ENCODE measurements at regions of chr17 and their contacts with region 1.

Region 1: GRCh38 chr17:40854159-40854814 is 12.7 kb downstream of the KRT12 start:
- DNase-seq: no peak
- H3K4me3 Mint-ChIP-seq: peak overlapping the region; percentile 33
- H3K27ac Mint-ChIP-seq: peak overlapping the region; percentile 86
- H3K4me1 Mint-ChIP-seq: peaks cover 85% of the 10 kb centered on the region
- H3K27me3 Mint-ChIP-seq: no peaks in the 10 kb centered on the region
- CTCF ChIP-seq: no peak

Region 2: GRCh38 chr17:39889200-39889599 is 965.1 kb before region 1 on chr17:
- CTCF ChIA-PET with region 1: no interaction called
- intact Hi-C with region 1: loop called (anchors 2 kb)
- DNase-seq: peak; percentile 82
- H3K4me3 Mint-ChIP-seq: no peak overlapping the region
- H3K27ac Mint-ChIP-seq: no peak overlapping the region
- H3K4me1 Mint-ChIP-seq: peaks cover 26% of the 10 kb centered on the region
- H3K27me3 Mint-ChIP-seq: peaks cover 22% of the 10 kb centered on the region
- CTCF ChIP-seq: no peak

Region 3: GRCh38 chr17:40803617-40804082 is 50.6 kb before region 1 on chr17:
- CTCF ChIA-PET with region 1: interaction called, 32 read pairs
- intact Hi-C with region 1: loop called (anchors 1 kb)
- DNase-seq: peak; percentile 100
- H3K4me3 Mint-ChIP-seq: no peak overlapping the region
- H3K27ac Mint-ChIP-seq: no peak overlapping the region
- H3K4me1 Mint-ChIP-seq: no peaks in the 10 kb centered on the region
- H3K27me3 Mint-ChIP-seq: peaks cover 38% of the 10 kb centered on the region
- CTCF ChIP-seq: peak; percentile 100

Region 4: DNA sequence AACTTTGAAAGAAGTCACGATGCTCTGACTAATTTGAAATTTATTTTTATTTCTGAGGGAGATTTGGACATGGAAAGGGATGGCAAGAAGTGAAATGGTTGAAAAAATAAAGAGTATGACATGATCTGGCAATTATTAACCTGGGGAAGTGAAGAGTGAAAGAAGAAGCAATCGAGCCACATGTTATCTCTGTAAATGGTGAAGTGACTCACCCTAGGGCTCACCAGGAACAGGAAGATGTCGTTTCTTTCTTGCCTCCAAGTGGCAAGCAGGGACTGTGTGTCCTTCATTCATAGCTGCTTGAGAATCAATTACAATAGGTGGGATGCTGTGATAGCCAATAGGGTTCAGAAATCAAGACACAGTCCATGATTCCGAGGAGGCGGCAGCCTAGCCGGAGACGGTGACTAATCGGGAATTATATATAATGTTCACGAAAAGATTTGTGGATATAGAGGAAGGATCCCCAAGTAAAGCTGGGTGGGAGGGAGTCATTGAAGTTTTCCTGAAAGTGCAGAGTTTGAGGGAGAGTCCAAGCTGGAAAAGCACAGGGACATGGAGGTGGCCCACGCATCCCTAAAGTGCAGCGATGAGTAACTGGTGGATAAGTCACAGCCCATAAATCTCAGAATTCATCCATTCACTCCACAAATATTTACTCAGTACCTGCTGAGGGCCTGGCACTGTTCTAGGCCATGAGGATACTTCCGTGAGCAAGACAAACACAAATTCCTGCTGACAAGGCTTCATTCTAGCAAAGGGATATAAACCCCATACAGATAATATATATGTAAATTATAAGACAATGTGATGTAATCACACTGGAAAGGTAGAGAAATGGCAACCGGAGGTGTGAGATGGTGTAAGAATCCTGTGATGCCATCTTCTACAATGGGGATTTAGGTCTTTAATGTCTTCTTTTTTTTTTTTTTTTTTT is 49.1 kb after region 1 on chr17:
- CTCF ChIA-PET with region 1: interaction called, 68 read pairs
- intact Hi-C with region 1: loop called (anchors 1 kb)
- DNase-seq: peak; percentile 82
- H3K4me3 Mint-ChIP-seq: peak overlapping the region; percentile 51
- H3K27ac Mint-ChIP-seq: peak overlapping the region; percentile 92
- H3K4me1 Mint-ChIP-seq: peaks cover 86% of the 10 kb centered on the region
- H3K27me3 Mint-ChIP-seq: no peaks in the 10 kb centered on the region
- CTCF ChIP-seq: no peak

Region 5: GRCh38 chr17:41037853-41038350 is 183.6 kb after region 1 on chr17:
- CTCF ChIA-PET with region 1: interaction called, 3 read pairs
- intact Hi-C with region 1: loop called (anchors 1 kb)
- DNase-seq: no peak
- H3K4me3 Mint-ChIP-seq: no peak overlapping the region
- H3K27ac Mint-ChIP-seq: no peak overlapping the region
- H3K4me1 Mint-ChIP-seq: peaks cover 49% of the 10 kb centered on the region
- H3K27me3 Mint-ChIP-seq: no peaks in the 10 kb centered on the region
- CTCF ChIP-seq: no peak

Region 6: DNA sequence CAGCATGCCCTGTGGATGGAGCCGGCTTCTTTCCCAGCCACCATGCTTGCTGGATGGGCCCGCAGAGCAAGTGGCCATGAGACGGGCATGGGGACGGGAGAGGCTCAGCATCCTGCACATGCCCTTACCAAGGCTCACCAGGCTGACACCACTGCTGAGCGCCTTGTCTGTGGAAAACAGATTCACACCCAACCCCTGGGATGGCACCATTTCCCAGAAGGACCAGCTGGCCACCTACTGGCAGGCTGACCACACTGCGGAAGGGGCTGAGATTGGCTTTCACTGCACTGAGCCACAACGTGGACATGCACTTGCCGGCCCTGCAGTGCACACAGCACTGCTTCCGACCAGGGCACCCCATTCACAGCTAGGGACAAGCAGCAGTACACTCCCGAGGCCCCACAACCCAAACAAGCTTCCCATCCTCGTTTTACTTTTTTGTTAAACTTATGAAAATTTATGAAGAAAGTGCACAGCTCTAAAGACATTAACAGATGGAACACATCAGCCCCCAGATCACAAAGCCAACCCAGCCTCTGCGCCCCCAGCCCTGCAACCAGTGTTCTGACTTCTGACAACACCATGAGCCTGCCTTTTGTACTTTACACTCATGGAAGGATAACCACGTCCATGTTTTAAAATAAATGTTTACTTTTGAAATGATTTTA is 475.1 kb after region 1 on chr17:
- CTCF ChIA-PET with region 1: no interaction called
- intact Hi-C with region 1: loop called (anchors 2 kb)
- DNase-seq: peak; percentile 85
- H3K4me3 Mint-ChIP-seq: no peak overlapping the region
- H3K27ac Mint-ChIP-seq: no peak overlapping the region
- H3K4me1 Mint-ChIP-seq: peaks cover 11% of the 10 kb centered on the region
- H3K27me3 Mint-ChIP-seq: no peaks in the 10 kb centered on the region
- CTCF ChIP-seq: peak; percentile 98

Region 7: DNA sequence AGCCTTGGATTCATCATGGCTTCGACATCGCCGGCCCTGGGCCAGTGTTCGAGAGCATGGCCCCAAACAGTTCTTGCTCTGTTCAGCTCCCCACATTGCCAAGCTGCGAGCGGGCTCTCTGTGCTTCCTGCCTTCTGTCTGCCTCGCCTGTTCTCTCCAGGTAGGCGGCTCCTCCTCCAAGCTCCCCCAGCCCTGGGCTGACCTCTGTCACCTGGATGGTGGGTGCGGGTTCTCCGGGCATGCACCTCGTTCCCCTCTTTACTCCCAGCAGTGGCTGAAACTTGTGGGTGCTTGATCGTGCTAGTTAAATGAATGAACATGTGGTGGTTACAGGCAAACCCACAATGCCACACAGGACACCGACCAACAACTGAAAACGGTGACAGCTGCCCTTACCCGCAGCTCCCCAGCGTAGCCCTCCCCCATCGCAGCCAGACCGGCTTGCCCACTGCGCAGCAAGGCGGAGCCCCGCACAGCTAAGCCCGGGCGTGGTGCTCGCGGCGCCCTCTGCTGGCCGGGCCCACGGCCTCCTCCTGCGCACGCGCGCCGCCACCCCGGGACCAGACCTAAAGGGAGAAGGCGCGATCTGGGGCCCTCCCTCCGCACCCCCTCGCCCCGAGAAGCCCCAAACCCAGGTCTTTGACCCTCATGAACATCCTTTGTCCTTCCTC is 811.4 kb after region 1 on chr17:
- CTCF ChIA-PET with region 1: interaction called, 8 read pairs
- intact Hi-C with region 1: loop called (anchors 5 kb)
- DNase-seq: peak; percentile 99
- H3K4me3 Mint-ChIP-seq: peak overlapping the region; percentile 77
- H3K27ac Mint-ChIP-seq: peak overlapping the region; percentile 95
- H3K4me1 Mint-ChIP-seq: peaks cover 65% of the 10 kb centered on the region
- H3K27me3 Mint-ChIP-seq: no peaks in the 10 kb centered on the region
- CTCF ChIP-seq: peak; percentile 94